Mammary epithelial cell (primary cell): ENCODE measurements at regions of chr7 and their contacts with region 1.

Region 1: GRCh38 chr7:85381212-85381611 is 194.4 kb upstream of the SEMA3D start:
- DNase-seq: no peak
- H3K4me3 ChIP-seq: no peak overlapping the region
- H3K27ac ChIP-seq: no peak overlapping the region
- H3K4me1 ChIP-seq: no peaks in the 10 kb centered on the region
- H3K27me3 ChIP-seq: peaks cover 2% of the 10 kb centered on the region
- CTCF ChIP-seq: no peak

Region 2: GRCh38 chr7:85336086-85336485 is 45.1 kb before region 1 on chr7:
- CTCF ChIA-PET with region 1: no interaction called
- dilution Hi-C with region 1: loop called (anchors 5 kb)
- in situ Hi-C with region 1: no loop called
- intact Hi-C with region 1: no loop called
- DNase-seq: no peak
- H3K4me3 ChIP-seq: no peak overlapping the region
- H3K27ac ChIP-seq: no peak overlapping the region
- H3K4me1 ChIP-seq: peaks cover 4% of the 10 kb centered on the region
- H3K27me3 ChIP-seq: peaks cover 2% of the 10 kb centered on the region
- CTCF ChIP-seq: no peak

Region 3: DNA sequence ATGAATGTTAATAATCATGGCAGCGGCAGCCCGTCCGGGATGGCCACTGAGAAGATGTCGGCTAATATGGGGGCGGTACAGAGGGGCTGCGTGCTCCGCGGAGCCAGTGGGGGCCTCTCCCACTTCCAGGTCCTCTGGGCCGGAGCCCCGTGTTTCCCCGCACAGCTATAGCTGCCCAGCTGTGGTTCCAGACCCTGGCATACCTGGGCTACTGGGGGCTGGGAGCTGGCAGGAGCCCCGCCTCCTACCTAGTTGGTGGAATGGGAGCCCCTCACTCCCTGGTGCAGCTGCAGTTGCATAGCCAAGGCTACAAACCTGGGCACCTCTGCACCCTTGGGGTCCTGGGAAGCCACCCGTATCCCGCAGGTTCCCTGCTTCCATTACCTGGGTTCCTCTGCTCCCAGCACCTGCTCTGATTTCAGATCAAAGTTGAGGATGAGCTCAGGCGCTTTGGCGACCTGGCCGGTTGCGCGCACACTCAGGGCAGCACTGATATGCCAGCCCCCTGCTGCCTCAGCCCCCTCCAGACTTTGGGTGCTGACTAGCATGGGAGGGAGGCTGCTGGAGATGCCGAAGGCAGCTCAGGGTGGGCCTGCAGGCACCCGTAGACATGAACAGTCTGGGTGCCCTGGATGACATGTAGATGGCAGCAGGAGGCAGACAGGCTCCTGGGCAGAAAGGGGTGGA is 42.1 kb after region 1 on chr7:
- CTCF ChIA-PET with region 1: no interaction called
- dilution Hi-C with region 1: no loop called
- in situ Hi-C with region 1: no loop called
- intact Hi-C with region 1: no loop called
- DNase-seq: no peak
- H3K4me3 ChIP-seq: no peak overlapping the region
- H3K27ac ChIP-seq: no peak overlapping the region
- H3K4me1 ChIP-seq: no peaks in the 10 kb centered on the region
- H3K27me3 ChIP-seq: no peaks in the 10 kb centered on the region
- CTCF ChIP-seq: no peak